ENCODE measurements at regions of chr11 and their contacts with region 1.

Region 1: DNA sequence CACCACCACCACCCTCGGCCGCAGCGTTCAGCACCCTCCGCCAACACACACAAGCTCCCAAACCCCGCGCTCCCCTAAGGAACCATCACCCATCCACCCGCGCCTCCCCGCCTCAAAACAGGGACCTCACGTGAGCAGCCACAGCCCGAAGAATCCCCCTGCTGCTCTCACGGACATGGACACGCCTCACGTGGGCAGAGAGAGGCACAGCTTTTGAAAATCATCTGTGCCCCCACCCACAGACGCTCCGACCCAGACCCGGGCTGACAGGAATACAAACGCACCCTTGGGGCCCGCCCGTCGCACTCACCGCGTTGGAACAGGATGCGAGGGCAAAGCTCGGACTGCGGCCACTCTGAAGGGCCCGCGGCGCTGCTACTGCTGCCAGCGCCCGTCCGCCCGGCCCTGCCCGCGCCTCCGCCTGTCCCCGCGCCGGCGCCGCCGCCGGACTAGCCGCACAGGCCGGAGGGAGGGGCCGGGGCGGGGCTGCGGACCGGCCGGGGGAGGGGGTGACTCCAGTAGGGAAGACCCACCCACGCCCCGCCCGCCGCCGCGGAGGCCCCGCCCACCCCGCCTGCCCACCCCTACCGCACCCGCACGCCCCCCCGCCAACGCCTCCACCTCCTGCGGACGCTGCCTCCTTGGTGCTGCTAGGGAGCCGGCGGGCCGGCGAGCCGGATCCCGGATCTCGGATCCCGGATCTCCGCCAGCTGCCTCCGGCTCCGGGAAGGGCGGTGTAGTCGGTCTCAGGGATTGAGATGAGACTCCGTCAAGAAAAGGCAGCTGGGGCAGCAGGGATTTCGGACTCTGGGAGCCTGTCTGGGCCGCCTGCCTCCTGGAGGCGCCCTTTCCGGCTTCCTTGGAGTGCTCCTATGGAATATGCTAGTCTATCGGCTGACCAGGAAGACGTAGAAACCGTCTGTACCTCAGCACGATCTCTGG is at the start of gene TRIM3:
- DNase-seq: peak; percentile 92 to 93
- ATAC-seq: peak; percentile 81 to 84
- H3K4me3 ChIP-seq: peak within 1 kb of the TSS; percentile 75 to 94 (median 80)
- H3K27ac ChIP-seq: peak within 1 kb of the TSS; percentile 87 to 99 (median 92)
- H3K4me1 ChIP-seq: peaks cover 14 to 15% of the 10 kb centered on the region in 2 donors
- H3K27me3 ChIP-seq: no peaks in the 10 kb centered on the region
- CTCF ChIP-seq: peak in 2 of 5 experiments; percentile 17 to 21
- POLR2A ChIP-seq: peak; percentile 87 to 93
- total RNA-seq, gene TRIM3: 15.3 to 20.0 (median 16.5) TPM

Region 2: DNA sequence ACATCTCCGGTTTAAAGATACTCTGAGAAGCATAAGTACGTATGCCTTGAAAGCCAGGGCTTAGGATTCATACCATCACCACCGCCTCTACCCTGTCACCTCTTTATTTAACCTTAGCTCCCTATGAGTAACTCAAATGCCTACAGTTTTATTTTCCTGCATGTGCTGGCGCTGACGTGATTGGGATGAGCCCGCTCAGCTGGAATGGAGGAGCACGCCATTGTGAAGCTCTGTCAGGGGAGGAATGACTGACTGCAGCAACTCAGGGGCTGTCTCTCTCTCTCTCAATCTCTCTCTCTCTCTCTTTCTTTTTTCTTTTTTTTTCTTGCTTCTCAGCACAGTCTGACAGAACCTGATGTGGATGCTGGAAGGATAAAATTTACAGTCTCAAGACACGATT is 165.9 kb before region 1 on chr11:
- in situ Hi-C with region 1: no loop called
- intact Hi-C with region 1: no loop called
- DNase-seq: no peak
- ATAC-seq: no peak
- H3K4me3 ChIP-seq: no peak overlapping the region
- H3K27ac ChIP-seq: no peak overlapping the region
- H3K4me1 ChIP-seq: no peaks in the 10 kb centered on the region
- H3K27me3 ChIP-seq: no peaks in the 10 kb centered on the region
- CTCF ChIP-seq: no peak
- POLR2A ChIP-seq: no peak

Region 3: GRCh38 chr11:6419009-6419631 is 54.6 kb before region 1 on chr11 and contains the start of gene APBB1:
- in situ Hi-C with region 1: no loop called
- intact Hi-C with region 1: loop called (anchors 1 kb)
- DNase-seq: peak; percentile 22 to 44
- ATAC-seq: peak; percentile 90 to 91
- H3K4me3 ChIP-seq: peak within 1 kb of the TSS; percentile 69 to 99 (median 92)
- H3K27ac ChIP-seq: peak within 1 kb of the TSS; percentile 78 to 92 (median 86)
- H3K4me1 ChIP-seq: peaks cover 14 to 15% of the 10 kb centered on the region in 2 donors
- H3K27me3 ChIP-seq: no peaks in the 10 kb centered on the region
- CTCF ChIP-seq: peak in 1 of 5 experiments; percentile 6
- POLR2A ChIP-seq: peak; percentile 42 to 48
- total RNA-seq, gene APBB1: 18.5 to 49.2 (median 46.2) TPM

Region 4: DNA sequence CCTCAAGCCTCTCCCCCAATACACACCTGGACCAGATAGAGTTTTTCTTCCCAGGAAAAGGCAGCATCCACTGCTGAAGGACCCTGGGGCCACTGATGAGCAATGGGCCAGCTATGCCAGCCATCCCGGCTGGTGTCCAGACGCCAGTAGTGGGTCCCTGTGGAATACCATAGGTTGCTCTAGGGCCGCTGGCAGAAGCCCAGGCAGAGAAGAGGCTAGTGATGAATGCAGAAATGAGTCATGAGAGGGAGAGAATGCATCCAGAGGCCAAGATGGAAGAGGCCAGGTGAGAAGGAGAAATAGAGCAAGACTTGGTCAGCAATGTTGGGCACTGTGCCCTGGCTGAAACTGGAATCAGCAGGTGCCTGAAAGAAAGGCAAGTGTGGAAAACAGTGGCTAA is 41.9 kb before region 1 on chr11:
- in situ Hi-C with region 1: no loop called
- intact Hi-C with region 1: no loop called
- DNase-seq: no peak
- ATAC-seq: no peak
- H3K4me3 ChIP-seq: no peak overlapping the region
- H3K27ac ChIP-seq: no peak overlapping the region
- H3K4me1 ChIP-seq: no peaks in the 10 kb centered on the region
- H3K27me3 ChIP-seq: no peaks in the 10 kb centered on the region
- CTCF ChIP-seq: no peak
- POLR2A ChIP-seq: no peak

Region 5: DNA sequence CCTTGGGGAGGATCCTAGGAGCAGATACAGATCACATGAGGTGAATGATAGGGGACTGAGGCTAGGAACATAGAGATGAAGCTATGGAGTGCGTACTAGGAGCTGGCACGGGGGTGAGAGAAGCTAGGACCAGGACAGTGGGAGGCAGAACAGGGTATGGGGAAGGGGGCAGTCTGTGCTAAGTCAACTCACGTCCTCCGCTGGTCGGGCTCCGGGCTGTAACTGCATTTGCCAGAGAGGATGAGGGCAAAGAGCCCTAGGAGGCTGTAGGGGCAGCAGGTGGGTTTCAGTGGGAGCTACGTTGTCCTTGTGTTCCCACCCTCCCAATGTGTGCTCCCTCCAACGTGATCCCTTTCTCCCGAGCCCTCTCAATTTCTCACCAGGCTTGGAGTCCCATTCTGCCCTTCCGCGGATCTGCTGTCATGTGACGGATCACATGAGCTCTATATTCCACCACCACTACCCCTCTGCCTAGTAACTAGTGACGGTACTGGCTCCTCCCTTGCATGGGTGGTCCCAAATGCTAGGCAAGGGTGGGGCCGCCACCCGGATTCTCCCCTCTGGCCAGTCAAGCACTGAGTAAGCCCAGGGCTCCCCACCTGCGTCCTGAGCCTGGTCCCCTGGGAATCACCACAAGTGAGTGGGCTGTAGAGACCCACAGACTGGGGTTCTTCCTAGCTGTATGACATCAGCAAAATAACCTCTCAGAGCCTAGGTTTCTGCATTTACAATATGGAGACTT is 145.4 kb after region 1 on chr11 and contains the start of gene TPP1:
- in situ Hi-C with region 1: no loop called
- intact Hi-C with region 1: no loop called
- DNase-seq: peak; percentile 90 to 93
- ATAC-seq: peak; percentile 100
- H3K4me3 ChIP-seq: peak within 1 kb of the TSS; percentile 65 to 84 (median 74)
- H3K27ac ChIP-seq: peak within 1 kb of the TSS; percentile 80 to 94 (median 90)
- H3K4me1 ChIP-seq: peaks cover 15 to 16% of the 10 kb centered on the region in 2 donors
- H3K27me3 ChIP-seq: no peaks in the 10 kb centered on the region
- CTCF ChIP-seq: no peak
- POLR2A ChIP-seq: peak; percentile 68 to 85
- total RNA-seq, gene TPP1: 13.9 to 43.4 (median 19.6) TPM

Region 6: GRCh38 chr11:7257724-7258123 is 784.0 kb after region 1 on chr11:
- in situ Hi-C with region 1: no loop called
- intact Hi-C with region 1: no loop called
- DNase-seq: no peak
- ATAC-seq: no peak
- H3K4me3 ChIP-seq: no peak overlapping the region
- H3K27ac ChIP-seq: no peak overlapping the region
- H3K4me1 ChIP-seq: peaks cover 2 to 4% of the 10 kb centered on the region in 2 donors
- H3K27me3 ChIP-seq: peaks cover 0 to 6% (median 0%) of the 10 kb centered on the region in 3 donors
- CTCF ChIP-seq: no peak
- POLR2A ChIP-seq: no peak